ENCODE measurements at regions of chr2 and their contacts with region 1.

Region 1: DNA sequence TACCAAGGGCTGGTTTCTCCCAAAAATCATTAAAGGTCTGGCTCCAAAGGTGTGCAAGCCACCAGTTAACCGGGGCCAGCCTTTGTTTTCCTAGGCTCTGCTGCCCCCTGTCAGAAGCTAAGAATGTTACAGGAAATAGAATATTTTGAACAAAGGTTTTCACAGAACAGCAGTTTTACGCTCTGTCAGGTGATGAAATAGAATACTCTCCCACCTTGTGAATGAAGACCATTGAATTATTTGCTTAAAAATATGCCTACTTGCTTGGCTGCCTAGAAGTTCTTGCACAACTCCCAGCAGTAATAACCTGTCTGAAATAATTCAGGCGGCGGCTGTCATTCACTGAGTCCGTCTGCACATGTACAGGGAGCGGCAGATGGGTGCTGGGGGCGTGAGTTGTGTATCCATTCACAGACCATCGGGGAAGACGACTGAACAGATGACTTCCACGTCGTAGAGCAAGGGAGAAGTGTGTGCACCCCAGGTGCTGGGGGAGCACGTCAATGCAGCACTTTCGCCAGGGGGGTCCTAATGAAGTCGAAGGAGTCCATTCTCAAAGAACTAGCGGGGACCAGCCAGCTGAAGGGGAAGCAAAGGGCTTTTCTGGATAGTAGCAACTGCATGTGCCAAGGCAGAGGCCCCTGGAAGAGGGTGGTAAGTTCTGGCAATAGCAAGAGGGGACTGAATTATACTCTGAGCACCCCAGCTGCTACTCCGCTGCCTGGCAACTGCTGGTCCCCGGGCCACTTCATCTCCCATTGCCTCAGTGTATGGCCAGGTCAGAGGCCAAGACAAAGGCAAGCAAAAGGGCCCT is 56.1 kb downstream of the SF3B1 start:
- DNase-seq: no peak
- ATAC-seq: peak; percentile 80
- H3K4me3 ChIP-seq: no peak overlapping the region
- H3K27ac ChIP-seq: no peak overlapping the region
- H3K4me1 ChIP-seq: peaks cover 12% of the 10 kb centered on the region
- H3K27me3 ChIP-seq: no peaks in the 10 kb centered on the region; a peak in 1 of 4 replicates
- CTCF ChIP-seq: peak; percentile 64 to 80 (median 80)
- EP300 ChIP-seq: no peak
- POLR2A ChIP-seq: no peak
- RAD21 ChIP-seq: peak; percentile 99

Region 2: DNA sequence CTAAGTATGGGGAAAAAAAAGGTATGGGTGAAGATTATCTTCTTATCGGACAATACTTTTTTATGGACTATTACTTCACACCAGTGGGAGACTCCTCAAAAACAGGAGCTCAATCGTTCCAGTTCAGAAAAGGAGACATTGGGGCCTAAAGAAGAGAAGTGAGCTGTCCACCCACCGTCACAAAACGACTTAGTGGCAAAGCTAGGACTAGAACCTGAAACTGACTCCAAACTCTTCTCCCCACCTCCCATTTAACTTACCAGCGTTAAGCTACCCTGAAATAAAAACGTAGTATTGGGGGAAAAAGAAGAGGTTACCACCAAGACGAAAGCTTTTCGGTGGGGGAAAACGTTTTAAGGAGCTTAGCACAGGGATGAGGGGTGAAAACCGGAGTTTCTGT is 579.7 kb before region 1 on chr2:
- CTCF ChIA-PET with region 1: no interaction called
- POLR2A ChIA-PET with region 1: no interaction called
- RAD21 ChIA-PET with region 1: no interaction called
- SMC1A ChIA-PET with region 1: no interaction called
- in situ Hi-C with region 1: loop called (anchors 25 kb)
- intact Hi-C with region 1: no loop called
- DNase-seq: no peak
- ATAC-seq: peak; percentile 21
- H3K4me3 ChIP-seq: peak overlapping the region; percentile 82
- H3K27ac ChIP-seq: peak overlapping the region; percentile 76
- H3K4me1 ChIP-seq: no peaks in the 10 kb centered on the region; the same call in 1 of the 2 replicates
- H3K27me3 ChIP-seq: no peaks in the 10 kb centered on the region
- CTCF ChIP-seq: no peak
- EP300 ChIP-seq: no peak
- POLR2A ChIP-seq: no peak
- RAD21 ChIP-seq: no peak

Region 3: DNA sequence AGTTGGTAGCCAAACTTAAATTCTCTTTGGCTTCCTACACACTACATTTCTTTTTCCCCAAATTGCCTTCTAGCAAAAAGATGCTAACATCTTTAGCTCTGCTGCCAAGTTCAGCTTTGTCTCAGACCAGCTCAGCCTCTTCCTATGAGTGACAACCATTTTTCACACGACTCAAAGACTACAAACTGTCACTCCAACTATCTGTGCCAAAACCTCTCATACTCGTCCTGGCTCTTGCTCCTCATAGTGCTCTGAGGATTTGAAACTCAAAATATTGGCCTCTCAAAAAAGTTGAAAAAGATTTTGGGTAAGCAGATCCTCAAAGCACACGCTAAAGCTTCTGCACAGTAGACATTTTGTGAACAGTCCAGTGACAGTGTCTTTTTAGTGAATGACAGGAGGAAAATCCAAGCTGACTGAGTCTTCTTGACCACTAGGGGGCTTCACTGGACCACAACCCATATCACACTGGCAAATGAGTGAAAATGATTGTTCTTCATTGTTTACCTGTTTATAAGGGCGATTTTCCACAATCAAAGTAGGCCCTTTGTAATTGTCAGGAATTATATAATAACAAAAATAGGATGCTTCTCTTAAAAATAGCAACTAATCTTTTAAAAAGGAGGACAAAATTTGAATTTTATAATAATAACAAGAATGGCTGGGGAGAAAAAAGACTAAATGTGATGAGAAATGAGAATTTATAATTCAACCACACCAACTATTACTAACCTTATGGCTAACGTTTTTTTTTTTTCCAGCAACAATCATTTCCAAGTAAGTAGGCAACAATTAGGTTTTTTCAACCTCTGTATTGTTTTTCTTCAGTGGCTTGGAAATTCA is 366.7 kb before region 1 on chr2:
- CTCF ChIA-PET with region 1: interaction called, 8 read pairs
- POLR2A ChIA-PET with region 1: no interaction called
- RAD21 ChIA-PET with region 1: interaction called, 6 read pairs
- SMC1A ChIA-PET with region 1: no interaction called
- in situ Hi-C with region 1: no loop called
- intact Hi-C with region 1: loop called (anchors 2 kb)
- DNase-seq: no peak
- ATAC-seq: peak; percentile 87
- H3K4me3 ChIP-seq: no peak overlapping the region
- H3K27ac ChIP-seq: no peak overlapping the region
- H3K4me1 ChIP-seq: no peaks in the 10 kb centered on the region
- H3K27me3 ChIP-seq: no peaks in the 10 kb centered on the region
- CTCF ChIP-seq: peak; percentile 64 to 75 (median 75)
- EP300 ChIP-seq: no peak
- POLR2A ChIP-seq: no peak
- RAD21 ChIP-seq: peak; percentile 73

Region 4: DNA sequence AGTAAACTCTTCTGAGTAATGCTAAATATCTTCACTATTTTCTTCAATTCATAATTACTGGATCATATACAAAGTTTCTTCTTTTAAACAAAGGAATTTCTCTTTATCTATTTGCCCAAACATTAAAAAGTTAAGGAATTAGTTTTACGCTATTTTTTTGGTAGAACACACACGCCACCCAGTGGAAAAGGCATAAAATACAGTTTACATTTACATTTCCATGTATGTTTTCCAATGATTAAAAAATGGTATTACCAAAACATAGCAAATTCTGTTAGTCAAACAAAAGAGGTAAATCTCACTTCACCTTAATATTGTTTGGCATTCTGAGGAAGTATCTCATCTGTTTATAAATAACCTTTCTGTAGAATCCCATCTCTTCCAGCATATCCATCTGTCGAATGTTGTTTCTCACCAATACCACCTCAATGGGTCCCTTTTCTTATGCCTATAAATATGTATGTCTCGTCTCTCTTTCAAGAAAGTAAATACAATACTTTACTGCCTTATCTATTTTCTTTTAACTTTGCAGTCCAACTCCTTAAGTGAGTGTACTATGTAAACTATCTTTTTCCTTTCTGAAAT is 399.2 kb after region 1 on chr2:
- CTCF ChIA-PET with region 1: interaction called, 7 read pairs
- POLR2A ChIA-PET with region 1: interaction called, 3 read pairs
- RAD21 ChIA-PET with region 1: interaction called, 7 read pairs
- SMC1A ChIA-PET with region 1: interaction called, 14 read pairs
- in situ Hi-C with region 1: no loop called
- intact Hi-C with region 1: loop called (anchors 2 kb)
- DNase-seq: peak; percentile 12
- ATAC-seq: no peak
- H3K4me3 ChIP-seq: no peak overlapping the region
- H3K27ac ChIP-seq: no peak overlapping the region
- H3K4me1 ChIP-seq: no peaks in the 10 kb centered on the region
- H3K27me3 ChIP-seq: no peaks in the 10 kb centered on the region
- CTCF ChIP-seq: peak; percentile 47 to 69 (median 50); a peak in 4 of 6 replicates
- EP300 ChIP-seq: no peak
- POLR2A ChIP-seq: no peak
- RAD21 ChIP-seq: peak; percentile 85

Measured in GM12878 (cell line).